Posterior vena cava (tissue), 2 donors: ENCODE measurements at regions of chr11 and their contacts with region 1.

Region 1: GRCh38 chr11:63974259-63975143 is at the start of gene COX8A:
- DNase-seq: peak; percentile 99
- total RNA-seq, gene COX8A: 161 to 203 TPM

Region 2: DNA sequence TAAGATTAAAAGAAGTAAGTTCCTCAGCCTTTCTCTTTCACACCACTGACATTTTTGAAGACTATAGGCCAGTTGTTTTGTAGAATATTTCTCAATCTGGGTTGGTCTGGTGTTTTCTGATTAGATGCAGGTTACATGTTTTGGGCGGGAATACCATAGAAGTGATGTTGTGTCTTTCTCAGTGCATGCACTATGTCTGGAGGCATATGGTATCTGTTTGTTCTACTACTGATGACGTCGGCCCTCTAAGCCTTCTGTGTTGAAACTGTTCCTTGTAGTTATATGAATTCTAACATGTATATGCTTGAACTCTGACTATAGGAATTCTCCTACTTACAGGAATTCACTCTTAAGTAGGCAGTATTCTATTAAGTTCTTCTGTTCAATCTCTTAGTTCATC is 227.5 kb before region 1 on chr11:
- intact Hi-C with region 1: no loop called
- DNase-seq: no peak

Region 3: DNA sequence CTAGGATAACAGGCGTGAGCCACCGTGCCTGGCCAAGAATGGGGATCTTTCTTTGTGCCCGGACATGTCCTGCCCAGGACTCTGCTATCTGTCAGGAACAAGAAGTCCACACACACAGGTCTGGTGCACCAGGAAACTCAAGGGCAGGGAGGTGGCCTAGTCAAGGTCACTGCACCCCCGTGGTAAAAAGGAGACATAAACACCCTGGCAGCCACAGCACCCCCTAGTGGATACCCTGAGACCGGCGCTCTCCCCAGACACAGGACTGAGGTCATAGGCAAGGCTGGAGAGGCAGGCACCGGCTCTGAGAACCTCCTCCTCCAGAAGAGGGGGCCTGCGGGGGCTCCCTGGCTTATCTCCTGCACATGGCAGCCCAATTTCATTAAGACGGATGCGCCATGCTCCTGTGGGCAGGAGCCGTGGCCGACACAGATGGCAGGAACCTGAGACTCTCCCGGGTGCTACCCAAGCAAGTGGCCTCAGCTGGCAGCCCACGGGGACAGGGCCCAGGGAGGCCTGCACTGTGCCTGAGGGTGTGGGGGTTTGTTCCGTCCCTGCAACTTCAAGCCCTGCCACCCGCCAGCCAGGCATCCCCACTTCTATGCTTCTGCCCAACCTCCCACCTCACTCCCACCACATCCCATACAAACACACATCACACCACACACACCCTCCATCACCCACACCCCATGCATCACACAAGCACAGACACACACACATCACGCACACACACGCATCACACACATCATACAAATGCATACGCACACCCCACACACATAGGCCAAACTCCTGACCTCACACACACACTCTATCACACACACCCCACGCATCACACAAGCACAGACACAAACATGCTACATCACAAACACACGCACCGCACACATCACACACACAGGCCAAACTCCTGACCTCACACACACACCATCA is 171.8 kb after region 1 on chr11:
- intact Hi-C with region 1: no loop called
- DNase-seq: no peak

Region 4: DNA sequence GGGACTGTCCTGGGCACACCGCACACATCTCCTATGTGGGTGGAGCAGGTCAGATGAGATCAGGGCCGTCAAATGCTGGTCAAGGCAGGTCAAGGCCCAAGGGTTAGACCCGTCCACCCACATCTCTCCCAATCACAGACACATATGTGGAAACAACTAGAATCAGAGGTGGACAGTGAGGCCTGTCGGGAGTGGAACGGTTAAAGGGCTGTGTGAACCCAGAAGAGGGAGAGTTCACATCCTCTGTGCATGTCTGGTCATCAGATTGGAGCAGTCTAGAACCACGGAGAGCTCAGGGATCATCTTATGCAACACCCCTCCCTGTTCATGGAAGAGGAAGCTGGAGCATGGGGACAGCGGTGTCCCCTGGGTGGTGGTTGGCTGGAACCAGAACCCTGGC is 1045.3 kb after region 1 on chr11:
- intact Hi-C with region 1: loop called in 1 of 2 experiments (anchors 5 kb)
- DNase-seq: no peak